HepG2 (cell line): ENCODE measurements at regions of chr14 and their contacts with region 1.

Region 1: DNA sequence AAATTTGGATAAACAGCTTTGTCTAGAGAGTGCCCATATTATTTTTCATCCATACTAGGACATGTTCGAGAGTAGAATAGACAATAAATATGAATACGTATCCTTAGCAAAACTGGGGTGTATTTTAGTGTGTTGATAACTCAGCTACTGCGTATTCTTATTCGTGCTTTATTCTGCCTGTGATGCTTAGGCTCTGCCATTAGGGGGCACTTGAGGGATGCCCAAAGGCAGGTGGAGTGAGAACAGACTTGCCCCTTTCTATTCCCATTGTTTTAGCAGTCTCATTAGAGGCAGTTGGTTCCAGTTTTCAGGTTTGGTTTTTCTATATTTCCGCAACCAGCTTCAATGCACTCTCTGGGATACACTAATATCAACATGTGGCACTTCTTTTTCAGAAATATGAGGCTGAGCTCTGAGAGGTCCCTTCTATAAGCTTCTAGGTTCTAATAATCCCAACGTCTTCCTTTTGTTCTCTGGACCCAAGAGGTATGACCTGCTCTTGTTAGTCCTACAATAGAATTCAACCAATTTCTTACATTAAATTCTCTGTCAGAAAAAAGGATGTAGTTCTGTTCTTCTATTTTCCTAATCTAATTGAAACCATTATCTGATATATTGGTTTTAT is 985.7 kb upstream of the FBXO33 start:
- DNase-seq: peak; percentile 62
- ATAC-seq: peak; percentile 98
- H3K4me3 ChIP-seq: no peak overlapping the region
- H3K27ac ChIP-seq: no peak overlapping the region
- H3K4me1 ChIP-seq: no peaks in the 10 kb centered on the region
- H3K27me3 ChIP-seq: no peaks in the 10 kb centered on the region
- CTCF ChIP-seq: peak; percentile 86
- EP300 ChIP-seq: no peak
- POLR2A ChIP-seq: no peak
- RAD21 ChIP-seq: no peak

Region 2: GRCh38 chr14:39491134-39491571 is 926.7 kb before region 1 on chr14:
- CTCF ChIA-PET with region 1: no interaction called
- POLR2A ChIA-PET with region 1: no interaction called
- in situ Hi-C with region 1: no loop called
- intact Hi-C with region 1: loop called (anchors 10 kb)
- DNase-seq: peak; percentile 59
- ATAC-seq: peak; percentile 51
- H3K4me3 ChIP-seq: no peak overlapping the region
- H3K27ac ChIP-seq: no peak overlapping the region
- H3K4me1 ChIP-seq: no peaks in the 10 kb centered on the region
- H3K27me3 ChIP-seq: 0 out of 5 replicates have a peak, but pooled peaks cover 0 to 2% of the 10 kb centered on the region in 2 experiments
- CTCF ChIP-seq: peak; percentile 62
- EP300 ChIP-seq: no peak
- POLR2A ChIP-seq: no peak
- RAD21 ChIP-seq: no peak; the same call in 1 of the 2 replicates

Region 3: DNA sequence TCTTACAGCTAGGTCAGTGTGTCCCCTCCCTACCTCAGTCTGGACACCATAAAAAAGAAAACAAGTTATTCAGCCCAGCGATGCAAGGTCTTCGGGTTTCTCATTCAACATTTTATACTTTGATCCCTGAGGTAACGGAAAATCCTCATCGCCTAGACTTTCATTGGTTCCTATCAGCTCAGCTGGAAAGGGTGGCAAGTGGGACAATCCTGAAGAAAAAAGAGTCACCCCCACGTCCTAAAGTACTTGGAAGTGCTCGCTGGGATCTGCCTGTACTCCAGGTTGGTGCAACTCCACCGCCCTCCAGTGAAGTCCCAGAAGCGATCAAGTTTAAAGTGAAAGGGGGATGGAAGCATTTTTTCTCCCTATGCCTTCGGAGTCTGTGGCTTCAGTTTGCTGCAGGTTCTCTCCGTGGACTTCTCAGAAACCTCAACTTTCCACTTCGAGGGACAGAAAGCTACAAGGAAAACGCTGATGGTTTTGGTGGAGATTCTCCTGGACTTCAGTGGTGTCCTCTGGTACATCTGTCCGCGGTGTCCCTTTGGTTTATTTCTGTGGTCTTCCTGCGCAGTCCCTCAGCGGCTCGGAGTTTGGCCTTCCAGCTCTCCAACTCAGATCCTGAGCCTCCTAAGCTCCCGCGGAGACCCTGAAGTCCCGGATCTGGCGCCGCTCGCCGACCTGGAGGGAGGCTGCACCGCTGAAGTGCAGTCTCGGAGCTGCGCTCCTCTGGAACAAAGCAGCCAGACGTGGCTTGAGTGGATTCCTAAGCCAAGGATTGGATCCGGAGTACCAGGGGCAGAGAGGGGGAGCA is 1187.0 kb after region 1 on chr14:
- CTCF ChIA-PET with region 1: no interaction called
- POLR2A ChIA-PET with region 1: no interaction called
- in situ Hi-C with region 1: no loop called
- intact Hi-C with region 1: loop called (anchors 1 kb)
- DNase-seq: no peak
- ATAC-seq: peak; percentile 63
- H3K4me3 ChIP-seq: peak overlapping the region in 2 of 3 experiments; percentile 8 to 18; a peak in 1 of 6 replicates
- H3K27ac ChIP-seq: no peak overlapping the region
- H3K4me1 ChIP-seq: peaks cover 17% of the 10 kb centered on the region
- H3K27me3 ChIP-seq: peaks cover 12 to 59% of the 10 kb centered on the region in 2 experiments
- CTCF ChIP-seq: no peak
- EP300 ChIP-seq: no peak
- POLR2A ChIP-seq: no peak
- RAD21 ChIP-seq: no peak